ENCODE measurements at regions of chr9 and their contacts with region 1.

Region 1: GRCh38 chr9:35954942-35955546 is 2.9 kb downstream of the OR2S2 start:
- DNase-seq: peak in 1 of 2 donors; percentile 77
- H3K4me3 ChIP-seq: no peak overlapping the region
- H3K27ac ChIP-seq: no peak overlapping the region
- H3K4me1 ChIP-seq: no peaks in the 10 kb centered on the region
- H3K27me3 ChIP-seq: no peaks in the 10 kb centered on the region
- CTCF ChIP-seq: peak; percentile 67 to 87 (median 73)

Region 2: GRCh38 chr9:36023260-36024048 is 68.4 kb after region 1 on chr9:
- intact Hi-C with region 1: loop called (anchors 1 kb)
- DNase-seq: peak in 1 of 2 donors; percentile 75
- H3K4me3 ChIP-seq: no peak overlapping the region
- H3K27ac ChIP-seq: no peak overlapping the region
- H3K4me1 ChIP-seq: no peaks in the 10 kb centered on the region
- H3K27me3 ChIP-seq: no peaks in the 10 kb centered on the region
- CTCF ChIP-seq: peak; percentile 50 to 81 (median 61)

Region 3: DNA sequence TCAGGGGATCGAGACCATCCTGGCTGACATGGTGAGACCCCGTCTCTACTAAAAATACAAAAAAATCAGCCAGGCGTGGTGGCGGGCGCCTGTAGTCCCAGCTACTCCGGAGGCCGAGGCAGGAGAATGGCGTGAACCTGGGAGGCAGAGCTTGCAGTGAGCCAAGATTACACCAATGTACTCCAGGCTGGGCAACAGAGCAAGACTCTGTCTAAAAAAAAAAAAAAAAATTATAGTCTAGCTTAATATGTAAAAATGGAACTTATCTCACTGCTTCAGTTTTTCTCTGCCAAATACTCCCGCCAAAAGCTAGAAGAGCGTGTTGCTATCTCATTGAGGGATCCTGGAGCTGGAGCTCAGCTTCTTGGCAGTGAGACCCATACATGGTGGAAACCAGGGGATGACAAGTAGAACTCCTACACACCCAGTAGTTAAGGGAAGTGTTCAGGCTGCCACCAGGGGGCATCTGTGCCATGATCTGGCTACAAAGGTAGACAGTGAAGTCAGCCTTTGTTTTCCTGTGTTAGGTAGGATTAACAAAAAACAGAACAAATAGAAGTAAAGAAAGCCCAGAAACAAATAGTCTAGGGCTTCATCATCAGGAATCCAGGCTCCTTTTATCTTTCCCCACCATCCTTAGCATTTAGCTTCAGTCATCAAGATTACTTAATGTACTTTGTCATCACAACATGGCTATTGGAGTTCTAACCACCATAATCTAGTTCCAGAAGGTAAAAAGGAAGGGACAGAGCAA is 147.9 kb after region 1 on chr9:
- intact Hi-C with region 1: loop called (anchors 10 kb)
- DNase-seq: peak; percentile 50 to 88
- H3K4me3 ChIP-seq: no peak overlapping the region
- H3K27ac ChIP-seq: peak overlapping the region; percentile 31 to 57
- H3K4me1 ChIP-seq: no peaks in the 10 kb centered on the region
- H3K27me3 ChIP-seq: no peaks in the 10 kb centered on the region
- CTCF ChIP-seq: peak; percentile 75 to 82 (median 79)

Measured in ascending aorta (tissue), 2 donors.